WTC11 (cell line): ENCODE measurements at regions of chr1 and their contacts with region 1.

Region 1: DNA sequence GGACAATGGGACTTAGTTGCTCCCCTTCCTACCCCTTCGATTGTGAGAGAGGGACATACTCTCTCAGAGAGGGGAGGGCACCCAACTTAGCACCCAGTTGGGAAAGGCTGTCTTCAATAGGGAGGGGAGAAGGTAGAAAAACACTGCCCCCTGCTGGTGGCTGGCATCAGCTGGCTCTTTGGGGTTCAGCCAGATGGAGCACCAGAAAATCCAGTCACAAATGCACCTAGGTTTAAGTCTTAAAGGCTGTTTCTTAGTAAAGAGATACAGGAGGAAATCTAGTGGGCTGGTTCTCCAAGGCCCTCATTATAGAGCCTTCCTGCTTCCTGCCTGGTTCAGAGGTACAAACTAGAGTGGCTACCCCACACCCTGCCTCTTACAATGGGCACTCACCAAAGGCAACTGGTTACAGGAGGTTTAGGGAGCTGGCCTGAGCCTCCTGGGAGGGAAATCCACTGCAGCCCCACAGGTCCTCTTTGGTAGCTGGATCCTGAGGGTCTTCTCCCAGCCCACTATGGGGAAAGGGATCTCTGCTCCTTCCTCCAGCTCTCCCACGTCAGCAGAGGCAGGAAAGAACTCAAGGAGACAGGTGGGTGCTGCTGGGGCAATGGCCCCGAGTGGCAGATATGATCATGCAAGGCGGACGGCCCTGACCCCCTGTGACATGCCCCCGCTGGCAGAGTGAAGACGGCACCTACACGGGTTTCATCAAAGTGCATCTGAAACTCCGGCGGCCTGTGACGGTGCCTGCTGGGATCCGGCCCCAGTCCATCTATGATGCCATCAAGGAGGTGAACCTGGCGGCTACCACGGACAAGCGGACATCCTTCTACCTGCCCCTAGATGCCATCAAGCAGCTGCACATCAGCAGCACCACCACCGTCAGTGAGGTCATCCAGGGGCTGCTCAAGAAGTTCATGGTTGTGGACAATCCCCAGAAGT is 28.3 kb downstream of the EIF2D start:
- DNase-seq: peak; percentile 84
- ATAC-seq: peak; percentile 84
- H3K4me3 Mint-ChIP-seq: no peak overlapping the region
- H3K27ac Mint-ChIP-seq: peak overlapping the region; percentile 79
- H3K4me1 Mint-ChIP-seq: peaks cover 4% of the 10 kb centered on the region
- H3K27me3 Mint-ChIP-seq: no peaks in the 10 kb centered on the region
- CTCF ChIP-seq: peak; percentile 90

Region 2: DNA sequence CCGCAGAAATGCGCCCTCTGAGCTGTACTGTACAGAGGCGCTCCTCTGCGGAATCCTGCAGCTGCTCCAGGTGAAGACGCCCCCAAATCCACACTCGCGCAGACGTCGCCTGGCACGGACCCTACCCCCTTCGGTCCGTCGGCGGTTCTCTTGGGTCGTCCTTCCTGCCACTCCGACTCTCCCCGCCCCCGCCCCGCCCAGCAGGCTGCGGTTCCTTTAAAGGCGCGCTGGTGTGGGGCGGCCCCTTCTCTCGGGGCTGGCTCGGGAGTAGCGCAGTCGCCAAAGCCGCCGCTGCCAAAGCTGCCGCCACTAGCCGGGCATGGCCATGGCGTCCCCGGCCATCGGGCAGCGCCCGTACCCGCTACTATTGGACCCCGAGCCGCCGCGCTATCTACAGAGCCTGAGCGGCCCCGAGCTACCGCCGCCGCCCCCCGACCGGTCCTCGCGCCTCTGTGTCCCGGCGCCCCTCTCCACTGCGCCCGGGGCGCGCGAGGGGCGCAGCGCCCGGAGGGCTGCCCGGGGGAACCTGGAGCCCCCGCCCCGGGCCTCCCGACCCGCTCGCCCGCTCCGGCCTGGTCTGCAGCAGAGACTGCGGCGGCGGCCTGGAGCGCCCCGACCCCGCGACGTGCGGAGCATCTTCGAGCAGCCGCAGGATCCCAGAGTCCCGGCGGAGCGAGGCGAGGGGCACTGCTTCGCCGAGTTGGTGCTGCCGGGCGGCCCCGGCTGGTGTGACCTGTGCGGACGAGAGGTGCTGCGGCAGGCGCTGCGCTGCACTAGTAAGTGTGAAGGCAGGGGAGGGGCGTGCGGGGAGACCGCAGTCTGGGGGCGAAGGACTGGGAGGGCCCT is 76.5 kb before region 1 on chr1 and contains the start of gene RASSF5:
- CTCF ChIA-PET with region 1: interaction called, 15 read pairs
- POLR2A ChIA-PET with region 1: no interaction called
- DNase-seq: peak; percentile 87
- ATAC-seq: peak; percentile 87
- H3K4me3 Mint-ChIP-seq: peak within 1 kb of the TSS; percentile 68
- H3K27ac Mint-ChIP-seq: no peak within 1 kb of the TSS
- H3K4me1 Mint-ChIP-seq: peaks cover 25% of the 10 kb centered on the region
- H3K27me3 Mint-ChIP-seq: peaks cover 76% of the 10 kb centered on the region
- CTCF ChIP-seq: no peak
- total RNA-seq, gene RASSF5: 1.7 to 2.1 TPM (median 1.7 TPM) in 3 replicates

Region 3: GRCh38 chr1:206518743-206519142 is 65.2 kb before region 1 on chr1:
- CTCF ChIA-PET with region 1: no interaction called
- POLR2A ChIA-PET with region 1: no interaction called
- DNase-seq: no peak
- ATAC-seq: no peak
- H3K4me3 Mint-ChIP-seq: no peak overlapping the region
- H3K27ac Mint-ChIP-seq: no peak overlapping the region
- H3K4me1 Mint-ChIP-seq: 0 out of 2 replicates have a peak, but pooled peaks cover 3% of the 10 kb centered on the region
- H3K27me3 Mint-ChIP-seq: peaks cover 4% of the 10 kb centered on the region; the same call in 1 of the 2 replicates
- CTCF ChIP-seq: no peak

Region 4: DNA sequence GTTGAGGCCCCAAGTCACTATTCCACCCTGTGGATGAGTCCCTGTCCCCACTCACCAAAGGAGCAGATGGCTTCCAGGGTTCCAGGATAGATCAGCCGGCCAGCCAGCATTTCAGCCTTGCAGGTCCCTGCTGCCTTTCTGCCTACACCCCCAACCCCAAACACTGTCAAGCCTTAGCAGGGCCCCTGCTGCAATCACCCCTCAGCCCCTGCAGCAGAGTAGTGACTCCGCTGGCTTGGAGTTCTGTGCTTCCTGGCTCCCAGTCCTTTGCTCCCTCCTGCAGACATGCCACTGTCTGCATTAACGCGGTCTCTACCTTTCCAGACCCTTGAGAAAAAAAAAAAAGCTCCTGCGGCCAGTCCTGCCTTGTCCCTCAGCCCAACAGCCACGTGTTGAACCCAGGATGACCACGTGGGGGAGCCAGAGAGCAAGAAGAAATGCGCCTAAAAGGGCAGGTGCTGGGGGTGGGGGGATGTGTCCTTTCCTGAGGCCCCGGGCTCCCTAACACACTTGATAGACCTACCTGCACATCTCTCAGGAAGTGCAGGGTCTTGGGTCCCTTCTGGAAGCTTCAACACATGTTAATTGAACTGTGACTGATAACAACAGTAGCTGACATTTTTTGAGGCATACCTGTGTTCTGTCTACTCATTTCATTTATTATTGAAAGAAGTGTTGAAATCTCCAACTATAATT is 39.3 kb before region 1 on chr1:
- CTCF ChIA-PET with region 1: interaction called, 95 read pairs
- POLR2A ChIA-PET with region 1: interaction called, 3 read pairs
- DNase-seq: peak; percentile 96
- ATAC-seq: peak; percentile 96
- H3K4me3 Mint-ChIP-seq: no peak overlapping the region; the same call in 1 of the 2 replicates
- H3K27ac Mint-ChIP-seq: no peak overlapping the region
- H3K4me1 Mint-ChIP-seq: peaks cover 8% of the 10 kb centered on the region
- H3K27me3 Mint-ChIP-seq: no peaks in the 10 kb centered on the region
- CTCF ChIP-seq: peak; percentile 78

Region 5: DNA sequence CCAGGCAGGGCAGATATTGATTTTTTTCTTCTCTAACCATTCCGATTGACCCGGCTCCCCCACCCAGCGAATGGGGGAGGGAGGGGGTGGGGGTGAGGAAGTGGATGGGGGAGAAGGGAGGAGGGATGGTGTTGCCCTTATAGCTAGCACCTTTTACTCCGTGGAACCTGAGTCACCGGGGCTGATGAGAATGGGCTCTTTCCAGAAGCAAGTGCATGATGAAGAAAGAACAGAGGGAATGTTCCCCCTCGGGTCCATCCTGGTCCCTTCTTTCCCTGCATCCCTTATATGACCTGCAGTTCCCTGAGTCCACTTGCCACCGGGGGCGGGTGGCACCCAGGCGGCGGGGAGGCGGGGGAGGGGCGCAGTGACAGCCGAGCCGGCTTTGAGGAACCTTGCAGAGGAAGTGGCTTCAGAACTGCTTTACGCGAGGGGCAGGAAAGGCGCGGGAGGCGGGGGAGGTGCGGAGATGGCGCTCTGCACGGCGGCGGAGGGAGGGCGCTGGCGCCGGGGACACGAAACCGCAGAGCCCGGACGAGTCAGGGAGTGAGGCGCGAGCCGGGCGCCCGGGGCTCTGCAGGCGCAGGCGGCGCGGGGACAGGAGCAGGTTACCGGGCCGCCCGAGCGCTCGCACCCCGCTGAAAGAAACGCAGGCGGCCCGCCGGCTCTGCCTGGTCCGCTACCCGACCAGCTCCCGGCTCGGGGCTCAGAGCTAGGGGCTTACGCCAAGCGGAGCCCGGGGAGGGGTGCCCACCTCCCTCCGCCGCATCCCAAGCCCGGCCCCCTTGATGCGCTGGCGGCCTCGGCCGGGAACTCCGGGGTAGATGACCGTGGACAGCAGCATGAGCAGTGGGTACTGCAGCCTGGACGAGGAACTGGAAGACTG is 27.0 kb before region 1 on chr1:
- CTCF ChIA-PET with region 1: interaction called, 17 read pairs
- POLR2A ChIA-PET with region 1: no interaction called
- DNase-seq: peak; percentile 73
- ATAC-seq: peak; percentile 83
- H3K4me3 Mint-ChIP-seq: peak overlapping the region; percentile 70
- H3K27ac Mint-ChIP-seq: no peak overlapping the region
- H3K4me1 Mint-ChIP-seq: peaks cover 35% of the 10 kb centered on the region
- H3K27me3 Mint-ChIP-seq: peaks cover 36% of the 10 kb centered on the region
- CTCF ChIP-seq: no peak